Gastrocnemius medialis (tissue), 4 donors: ENCODE measurements at regions of chr9 and their contacts with region 1.

Region 1: GRCh38 chr9:19230356-19231125 is at the start of gene DENND4C:
- DNase-seq: peak; percentile 69 to 75
- ATAC-seq: peak; percentile 86 to 91
- H3K4me3 ChIP-seq: peak within 1 kb of the TSS; percentile 88 to 100 (median 94)
- H3K27ac ChIP-seq: peak within 1 kb of the TSS; percentile 94 to 99 (median 96)
- H3K4me1 ChIP-seq: peaks cover 21 to 24% of the 10 kb centered on the region in 2 donors
- H3K27me3 ChIP-seq: no peaks in the 10 kb centered on the region
- CTCF ChIP-seq: peak in 1 of 5 experiments; percentile 17
- POLR2A ChIP-seq: peak; percentile 70 to 80
- total RNA-seq, gene DENND4C: 19.2 to 34.0 (median 21.3) TPM

Region 2: DNA sequence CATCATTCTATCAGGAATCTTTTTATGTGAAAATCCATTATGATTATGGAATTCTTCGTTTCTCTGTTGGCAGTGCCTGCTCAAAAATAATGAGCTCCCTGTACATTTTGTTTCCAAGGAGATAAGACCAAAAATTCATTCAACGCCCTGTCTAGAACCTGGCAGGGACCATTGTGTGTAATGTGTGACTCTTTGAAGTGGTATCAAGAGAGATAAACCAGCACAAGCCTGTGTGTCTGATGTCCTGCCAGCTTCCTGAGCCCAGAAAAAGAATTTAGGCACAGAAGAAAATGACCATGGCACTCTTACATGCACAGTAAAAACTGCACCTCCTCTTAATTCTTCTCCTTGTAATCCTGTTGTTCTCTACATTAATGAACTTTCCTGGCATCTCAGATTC is 374.9 kb before region 1 on chr9:
- in situ Hi-C with region 1: no loop called
- intact Hi-C with region 1: no loop called
- DNase-seq: no peak
- ATAC-seq: no peak
- H3K4me3 ChIP-seq: no peak overlapping the region
- H3K27ac ChIP-seq: no peak overlapping the region
- H3K4me1 ChIP-seq: no peaks in the 10 kb centered on the region
- H3K27me3 ChIP-seq: no peaks in the 10 kb centered on the region
- CTCF ChIP-seq: no peak
- POLR2A ChIP-seq: no peak

Region 3: GRCh38 chr9:19379697-19380046 is 149.1 kb after region 1 on chr9:
- in situ Hi-C with region 1: no loop called
- intact Hi-C with region 1: loop called (anchors 5 kb)
- DNase-seq: peak in 1 of 2 donors; percentile 9
- ATAC-seq: peak; percentile 43 to 56
- H3K4me3 ChIP-seq: peak overlapping the region; percentile 79 to 93 (median 90)
- H3K27ac ChIP-seq: peak overlapping the region; percentile 89 to 97 (median 95)
- H3K4me1 ChIP-seq: peaks cover 21 to 27% of the 10 kb centered on the region in 2 donors
- H3K27me3 ChIP-seq: no peaks in the 10 kb centered on the region
- CTCF ChIP-seq: no peak
- POLR2A ChIP-seq: no peak

Region 4: GRCh38 chr9:20684035-20684872 is 1453.7 kb after region 1 on chr9 and contains the start of gene FOCAD:
- in situ Hi-C with region 1: loop called in 1 of 4 experiments (anchors 25 kb)
- intact Hi-C with region 1: no loop called
- DNase-seq: peak; percentile 92 to 96
- ATAC-seq: peak; percentile 90 to 94
- H3K4me3 ChIP-seq: peak within 1 kb of the TSS; percentile 71 to 82 (median 77)
- H3K27ac ChIP-seq: peak within 1 kb of the TSS; percentile 89 to 98 (median 96)
- H3K4me1 ChIP-seq: peaks cover 16 to 31% of the 10 kb centered on the region in 2 donors
- H3K27me3 ChIP-seq: no peaks in the 10 kb centered on the region
- CTCF ChIP-seq: peak in 1 of 5 experiments; percentile 14
- POLR2A ChIP-seq: peak; percentile 95 to 99
- total RNA-seq, gene FOCAD: 19.5 to 36.0 (median 28.6) TPM